ENCODE measurements at regions of chr5 and their contacts with region 1.

Region 1: GRCh38 chr5:159098603-159099436 is 896 bp downstream of the EBF1 start:
- DNase-seq: no peak
- H3K4me3 ChIP-seq: peak overlapping the region; percentile 54 to 62
- H3K27ac ChIP-seq: peak overlapping the region; percentile 86
- H3K4me1 ChIP-seq: peaks cover 5% of the 10 kb centered on the region
- H3K27me3 ChIP-seq: no peaks in the 10 kb centered on the region
- CTCF ChIP-seq: no peak
- POLR2A ChIP-seq: no peak

Region 2: GRCh38 chr5:158699298-158699880 is 399.4 kb before region 1 on chr5:
- intact Hi-C with region 1: loop called (anchors 2 kb)
- DNase-seq: no peak
- H3K4me3 ChIP-seq: no peak overlapping the region
- H3K27ac ChIP-seq: peak overlapping the region; percentile 42
- H3K4me1 ChIP-seq: peaks cover 17% of the 10 kb centered on the region
- H3K27me3 ChIP-seq: no peaks in the 10 kb centered on the region
- CTCF ChIP-seq: no peak
- POLR2A ChIP-seq: no peak

Region 3: GRCh38 chr5:158802941-158803341 is 295.9 kb before region 1 on chr5:
- intact Hi-C with region 1: loop called (anchors 5 kb)
- DNase-seq: no peak
- H3K4me3 ChIP-seq: no peak overlapping the region
- H3K27ac ChIP-seq: peak overlapping the region; percentile 47
- H3K4me1 ChIP-seq: peaks cover 40% of the 10 kb centered on the region
- H3K27me3 ChIP-seq: no peaks in the 10 kb centered on the region
- CTCF ChIP-seq: no peak
- POLR2A ChIP-seq: no peak

Region 4: DNA sequence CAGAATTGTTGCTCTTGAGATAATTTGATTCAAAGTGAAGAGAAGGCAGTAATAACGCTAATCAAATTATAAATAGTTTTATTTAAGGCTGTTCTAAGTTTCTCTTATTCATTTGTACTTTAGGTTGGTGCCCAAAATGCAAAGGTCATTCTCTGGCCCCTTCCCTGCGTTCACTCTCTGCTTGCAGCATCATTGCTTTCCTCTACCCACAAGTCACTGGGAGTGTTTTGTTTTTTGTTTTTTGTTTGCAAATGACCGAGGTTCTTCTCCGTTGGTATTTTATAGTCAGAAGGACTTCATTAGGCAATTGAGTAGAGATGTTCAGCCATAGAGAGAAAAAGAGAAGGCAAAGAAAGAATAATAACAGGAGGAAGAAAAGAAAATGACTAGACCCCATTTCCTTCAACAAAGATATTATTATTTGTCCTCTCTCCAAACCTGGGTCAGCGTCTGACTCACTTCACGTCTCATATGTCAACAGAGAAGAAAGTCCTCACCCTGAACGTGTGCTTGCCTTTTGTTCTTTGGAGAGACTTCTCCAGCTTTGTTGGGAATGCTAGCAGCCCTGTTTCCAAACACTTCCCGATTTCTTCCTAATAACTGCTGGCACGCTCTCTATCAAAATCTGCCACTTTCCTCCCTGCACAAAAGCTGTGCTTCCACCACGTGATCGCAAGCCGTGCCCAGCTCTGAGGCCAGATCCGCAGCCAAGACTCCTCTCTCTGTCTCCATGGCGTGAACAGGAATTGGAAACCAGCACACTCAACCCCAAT is 118.9 kb before region 1 on chr5:
- intact Hi-C with region 1: loop called (anchors 10 kb)
- DNase-seq: no peak
- H3K4me3 ChIP-seq: peak overlapping the region in 1 of 2 donors; percentile 14
- H3K27ac ChIP-seq: peak overlapping the region; percentile 46
- H3K4me1 ChIP-seq: peaks cover 43% of the 10 kb centered on the region
- H3K27me3 ChIP-seq: no peaks in the 10 kb centered on the region
- CTCF ChIP-seq: no peak
- POLR2A ChIP-seq: no peak

Region 5: DNA sequence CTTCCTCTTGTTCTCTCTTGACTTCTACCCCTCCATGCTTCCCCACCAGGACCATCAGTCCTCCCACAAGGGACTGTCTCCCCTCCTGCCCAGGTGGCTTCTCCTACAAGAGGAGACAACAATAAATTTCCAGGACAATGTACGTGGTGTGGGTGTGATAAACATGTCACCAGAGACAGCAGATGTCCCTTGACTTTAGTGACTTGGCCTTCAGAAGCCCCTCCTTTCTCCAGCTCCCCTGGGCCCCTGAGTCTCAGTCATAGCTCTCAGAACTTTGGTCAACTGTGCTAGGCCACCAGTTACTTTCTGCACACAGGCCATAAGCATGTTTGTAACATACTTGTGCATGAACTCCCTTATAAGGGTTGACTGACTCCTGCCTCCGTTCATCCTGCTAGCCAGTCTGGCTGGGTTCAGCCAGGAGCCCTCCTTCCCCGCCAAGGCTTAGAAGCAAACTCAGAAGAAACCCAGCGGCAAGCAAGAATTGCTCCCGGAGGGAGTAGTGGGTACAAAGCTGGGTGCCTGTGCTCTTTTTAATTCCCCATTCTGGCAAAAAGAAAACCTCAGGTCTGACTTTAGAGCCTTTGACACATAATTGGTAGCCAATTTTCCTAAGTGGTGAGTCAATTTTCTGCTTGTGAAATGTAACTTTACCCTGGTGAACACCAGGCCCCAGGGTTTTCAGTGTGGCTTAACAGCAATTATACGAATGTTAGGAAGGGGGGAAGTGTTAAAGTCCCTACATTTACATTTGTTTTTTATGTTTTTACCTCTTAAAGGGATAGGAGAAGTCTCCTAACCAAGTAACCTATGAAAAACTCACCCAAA is 48.3 kb before region 1 on chr5:
- intact Hi-C with region 1: loop called (anchors 5 kb)
- DNase-seq: no peak
- H3K4me3 ChIP-seq: peak overlapping the region; percentile 19 to 38
- H3K27ac ChIP-seq: peak overlapping the region; percentile 75
- H3K4me1 ChIP-seq: peaks cover 19% of the 10 kb centered on the region
- H3K27me3 ChIP-seq: no peaks in the 10 kb centered on the region
- CTCF ChIP-seq: no peak
- POLR2A ChIP-seq: no peak

Region 6: DNA sequence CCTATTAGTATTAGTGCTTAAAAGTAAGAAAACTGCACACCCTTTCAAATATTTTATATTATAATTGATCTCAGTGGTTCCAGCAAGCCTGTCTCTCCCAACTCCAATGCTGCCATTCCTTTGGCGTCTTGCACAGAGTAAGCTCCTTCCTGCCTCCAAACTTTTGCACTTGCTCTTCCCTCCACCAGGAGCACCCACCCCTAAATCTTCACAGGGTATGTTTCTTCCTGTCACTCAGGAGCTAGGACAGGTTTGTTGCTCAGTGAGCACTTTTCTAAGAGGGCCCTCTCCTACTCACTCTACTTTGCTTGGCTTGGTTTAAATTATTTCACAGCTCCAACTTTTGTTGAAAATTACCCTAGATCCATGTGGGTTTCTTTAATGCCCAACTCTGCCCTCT is 628.3 kb after region 1 on chr5:
- intact Hi-C with region 1: no loop called
- DNase-seq: no peak
- H3K4me3 ChIP-seq: no peak overlapping the region
- H3K27ac ChIP-seq: no peak overlapping the region
- H3K4me1 ChIP-seq: no peaks in the 10 kb centered on the region
- H3K27me3 ChIP-seq: no peaks in the 10 kb centered on the region
- CTCF ChIP-seq: no peak
- POLR2A ChIP-seq: no peak